MCF 10A (cell line): ENCODE measurements at regions of chr5 and their contacts with region 1.

Region 1: DNA sequence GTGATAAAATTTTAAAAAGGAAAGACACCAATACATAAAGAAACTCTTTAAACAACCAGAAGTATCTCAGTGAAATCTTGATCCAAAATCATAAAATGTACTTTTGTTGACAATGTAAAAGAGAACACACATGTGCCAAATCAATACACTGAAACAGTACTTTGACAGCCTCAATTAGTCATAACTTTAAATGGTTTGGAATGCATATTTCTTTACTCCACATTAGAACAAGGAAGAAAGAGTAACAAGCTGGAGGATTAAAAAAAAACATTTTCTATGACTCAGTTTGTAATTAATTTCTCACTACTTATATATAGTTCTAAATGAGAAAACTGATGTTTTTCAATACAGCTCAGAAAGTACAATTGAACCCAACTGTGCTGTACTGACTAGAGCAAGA is 101.1 kb downstream of the NR3C1 start:
- DNase-seq: no peak
- H3K4me3 Mint-ChIP-seq: no peak overlapping the region
- H3K27ac Mint-ChIP-seq: peak overlapping the region; percentile 65
- H3K4me1 Mint-ChIP-seq: peaks cover 31% of the 10 kb centered on the region
- H3K27me3 Mint-ChIP-seq: no peaks in the 10 kb centered on the region
- CTCF ChIP-seq: no peak

Region 2: GRCh38 chr5:143314659-143315058 is 12.3 kb after region 1 on chr5:
- CTCF ChIA-PET with region 1: no interaction called
- POLR2A ChIA-PET with region 1: interaction called, 18 read pairs
- intact Hi-C with region 1: no loop called
- DNase-seq: peak; percentile 68
- H3K4me3 Mint-ChIP-seq: no peak overlapping the region
- H3K27ac Mint-ChIP-seq: peak overlapping the region; percentile 73
- H3K4me1 Mint-ChIP-seq: peaks cover 69% of the 10 kb centered on the region
- H3K27me3 Mint-ChIP-seq: no peaks in the 10 kb centered on the region
- CTCF ChIP-seq: no peak